Activated B cell treated with CpG ODN at 0.5 μM for 24 hours (primary cell): ENCODE measurements at regions of chr14 and their contacts with region 1.

Region 1: GRCh38 chr14:90903101-90903500 is 86.9 kb upstream of the TTC7B start:
- DNase-seq: no peak
- ATAC-seq: peak; percentile 66
- H3K4me3 Mint-ChIP-seq: no peak overlapping the region
- H3K27ac Mint-ChIP-seq: no peak overlapping the region
- H3K4me1 Mint-ChIP-seq: peaks cover 14% of the 10 kb centered on the region
- H3K27me3 Mint-ChIP-seq: no peaks in the 10 kb centered on the region
- CTCF ChIP-seq: peak; percentile 89

Region 2: GRCh38 chr14:90890322-90891020 is 12.6 kb before region 1 on chr14:
- CTCF ChIA-PET with region 1: interaction called, 11 read pairs
- POLR2A ChIA-PET with region 1: no interaction called
- intact Hi-C with region 1: no loop called
- DNase-seq: no peak
- ATAC-seq: no peak
- H3K4me3 Mint-ChIP-seq: no peak overlapping the region
- H3K27ac Mint-ChIP-seq: no peak overlapping the region
- H3K4me1 Mint-ChIP-seq: no peaks in the 10 kb centered on the region
- H3K27me3 Mint-ChIP-seq: no peaks in the 10 kb centered on the region
- CTCF ChIP-seq: no peak

Region 3: DNA sequence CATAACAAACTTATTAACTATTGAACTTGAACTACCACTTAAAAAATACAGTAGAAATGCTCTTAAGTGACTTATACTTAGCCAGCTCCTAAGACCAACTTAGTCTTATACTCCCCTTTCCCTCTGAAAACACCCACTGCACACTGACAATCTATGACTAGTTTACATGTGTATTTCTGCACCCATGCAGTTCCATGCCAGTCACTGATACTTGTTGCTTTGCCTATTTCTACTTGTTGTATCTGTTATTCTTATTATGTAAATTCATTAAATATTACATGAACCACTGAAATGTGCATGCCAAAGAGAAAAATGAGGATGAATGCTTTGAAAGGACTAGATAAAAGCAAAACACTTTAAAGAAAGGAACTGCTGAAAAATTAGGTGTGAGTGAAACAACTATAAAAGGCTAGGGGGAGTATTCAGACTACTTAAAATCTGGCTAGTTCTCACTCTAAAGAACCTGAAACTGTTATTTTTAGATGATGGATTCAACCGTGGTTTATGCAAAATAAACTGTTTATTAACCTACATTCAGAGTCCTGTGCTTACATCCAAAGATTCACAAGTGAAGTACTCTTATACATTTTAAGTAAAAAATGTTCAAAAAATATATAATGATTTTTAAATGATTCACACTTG is 82.6 kb after region 1 on chr14:
- CTCF ChIA-PET with region 1: interaction called, 11 read pairs
- POLR2A ChIA-PET with region 1: no interaction called
- intact Hi-C with region 1: loop called (anchors 5 kb)
- DNase-seq: no peak
- ATAC-seq: peak; percentile 57
- H3K4me3 Mint-ChIP-seq: no peak overlapping the region
- H3K27ac Mint-ChIP-seq: no peak overlapping the region
- H3K4me1 Mint-ChIP-seq: peaks cover 19% of the 10 kb centered on the region
- H3K27me3 Mint-ChIP-seq: no peaks in the 10 kb centered on the region
- CTCF ChIP-seq: no peak

Region 4: DNA sequence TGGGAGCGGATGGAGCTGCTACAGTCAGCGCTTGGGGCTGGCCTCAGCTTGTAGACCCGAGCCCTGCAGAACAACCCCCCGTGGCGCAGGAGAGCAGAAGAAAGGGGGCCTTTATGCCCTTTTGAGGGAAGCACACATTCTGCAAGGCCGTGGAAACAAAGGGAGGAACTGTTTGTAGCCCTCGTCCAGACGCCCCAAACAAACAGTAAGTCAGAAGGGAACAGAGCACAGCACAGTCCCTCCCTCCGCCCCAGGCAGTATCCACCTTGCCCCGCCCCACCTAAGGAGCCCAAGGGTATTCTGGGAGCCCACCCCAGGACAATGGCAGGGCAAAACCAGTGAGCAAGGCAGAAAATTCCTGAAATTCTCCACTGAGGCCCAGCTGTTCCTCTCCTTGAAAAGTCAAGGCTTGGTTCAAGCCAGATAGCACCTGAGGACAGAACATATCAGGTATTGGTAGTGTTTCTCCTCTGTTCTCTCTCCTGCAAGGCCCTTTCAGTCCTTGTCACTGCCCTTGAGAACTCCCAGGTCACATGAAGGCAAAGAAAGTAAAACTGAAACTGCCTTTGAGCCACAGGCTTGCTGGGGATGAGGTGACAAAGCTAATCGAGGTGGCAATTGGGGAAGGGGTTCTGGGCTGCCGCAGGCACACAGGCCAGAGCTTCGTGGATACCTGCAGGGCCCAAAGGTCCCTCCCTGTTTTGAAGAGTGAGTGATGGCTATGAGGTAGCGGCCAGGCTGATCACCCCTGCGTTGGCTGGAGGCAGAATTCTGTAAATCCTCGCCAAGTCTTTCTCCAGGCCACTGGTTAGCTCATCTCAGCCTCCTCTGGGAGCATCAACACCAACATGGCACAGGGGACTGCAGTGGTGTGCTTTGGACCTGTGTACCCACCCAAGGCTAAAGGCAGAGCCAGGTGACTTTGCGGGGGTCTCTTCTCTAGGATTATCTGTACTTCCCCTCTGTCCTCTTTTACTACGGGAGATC is 211.3 kb after region 1 on chr14:
- CTCF ChIA-PET with region 1: interaction called, 6 read pairs
- POLR2A ChIA-PET with region 1: interaction called, 12 read pairs
- intact Hi-C with region 1: loop called (anchors 1 kb)
- DNase-seq: peak; percentile 54
- ATAC-seq: peak; percentile 84
- H3K4me3 Mint-ChIP-seq: peak overlapping the region; percentile 98
- H3K27ac Mint-ChIP-seq: peak overlapping the region; percentile 98
- H3K4me1 Mint-ChIP-seq: peaks cover 67% of the 10 kb centered on the region
- H3K27me3 Mint-ChIP-seq: no peaks in the 10 kb centered on the region
- CTCF ChIP-seq: no peak

Region 5: DNA sequence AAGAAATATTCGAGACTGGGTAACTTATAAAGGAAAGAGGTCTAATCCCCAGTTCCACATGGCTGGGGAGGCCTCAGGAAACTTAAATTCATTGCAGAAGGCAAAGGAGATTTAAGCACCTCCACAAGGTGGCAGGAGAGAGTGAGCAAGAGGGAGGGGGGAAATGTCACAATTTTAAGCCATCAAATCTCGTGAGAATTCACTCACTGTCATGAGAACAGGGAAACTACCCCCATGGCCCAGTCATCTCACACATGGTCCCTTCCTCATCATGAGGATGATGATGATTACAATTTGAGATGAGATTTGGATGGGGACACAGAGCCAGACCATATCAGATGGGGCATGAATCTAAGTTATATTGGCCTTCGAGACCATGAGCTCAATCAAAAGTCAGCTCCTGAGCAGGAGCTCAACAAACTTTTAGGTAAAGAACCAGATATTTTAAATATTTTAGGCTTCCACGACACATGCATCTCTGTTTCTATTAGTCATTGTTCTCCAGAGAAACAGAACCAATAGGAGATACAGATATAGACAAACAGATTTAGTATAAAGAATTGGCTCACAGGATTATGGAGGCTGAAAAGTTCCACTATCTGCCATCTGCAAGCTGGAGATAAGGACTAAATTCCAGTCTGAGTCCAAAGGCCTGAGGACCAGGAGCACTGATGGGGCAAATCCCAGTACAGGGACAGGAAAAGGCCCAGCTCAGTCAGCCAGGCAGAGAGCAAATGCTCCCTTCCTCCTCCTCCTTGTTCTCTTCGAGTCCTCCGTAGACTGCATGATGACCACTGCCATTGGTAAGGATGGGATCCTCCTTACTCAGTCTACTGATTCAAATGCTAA is 235.6 kb after region 1 on chr14:
- CTCF ChIA-PET with region 1: interaction called, 7 read pairs
- POLR2A ChIA-PET with region 1: no interaction called
- intact Hi-C with region 1: loop called (anchors 10 kb)
- DNase-seq: no peak
- ATAC-seq: peak; percentile 29
- H3K4me3 Mint-ChIP-seq: no peak overlapping the region
- H3K27ac Mint-ChIP-seq: peak overlapping the region; percentile 69
- H3K4me1 Mint-ChIP-seq: peaks cover 32% of the 10 kb centered on the region
- H3K27me3 Mint-ChIP-seq: no peaks in the 10 kb centered on the region
- CTCF ChIP-seq: no peak

Region 6: DNA sequence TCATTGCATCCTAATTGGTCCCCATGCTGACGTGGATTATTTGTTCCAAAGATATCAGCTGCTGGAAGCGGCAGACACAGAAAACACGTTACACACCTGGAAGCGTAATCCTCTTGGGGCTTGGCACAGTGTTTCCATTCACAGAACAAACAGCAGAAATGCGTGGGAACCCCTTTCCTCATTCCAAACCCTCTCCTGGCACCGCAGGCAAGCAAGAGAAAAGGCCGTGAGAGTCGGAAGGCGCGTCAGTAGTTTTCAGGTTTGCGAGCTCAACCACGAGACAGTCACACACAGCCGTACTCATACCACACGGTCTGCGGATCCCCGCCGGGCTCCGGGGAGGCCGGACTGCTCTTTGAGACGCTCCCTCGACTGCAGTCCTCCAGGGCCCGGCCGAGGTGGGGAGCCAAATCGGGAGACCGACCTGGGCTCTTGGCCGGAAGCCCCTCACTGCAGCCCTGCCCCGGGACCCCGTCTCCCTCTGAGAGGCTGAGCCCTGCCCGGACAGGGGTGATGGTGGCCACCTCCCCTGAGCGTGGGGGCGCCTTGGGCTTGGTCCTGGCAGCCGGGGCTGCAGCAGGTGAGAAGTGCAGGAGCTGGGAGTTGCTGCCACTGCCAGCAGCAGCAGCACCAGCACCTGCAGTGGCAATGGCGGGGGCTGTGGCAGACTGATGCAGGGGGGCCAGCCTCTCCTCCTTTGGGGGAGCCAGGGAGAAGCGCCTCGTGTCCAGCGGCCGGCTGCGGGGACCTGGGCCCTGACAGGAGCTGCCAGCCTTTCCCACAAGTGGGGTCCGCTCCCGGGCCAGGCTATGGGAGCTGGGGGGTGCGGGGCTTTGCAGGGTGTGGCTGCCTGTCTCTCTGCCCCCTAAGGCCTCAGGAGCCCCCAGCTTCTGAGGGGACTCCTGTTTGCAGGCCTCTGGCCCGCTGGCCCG is 369.5 kb after region 1 on chr14:
- CTCF ChIA-PET with region 1: no interaction called
- POLR2A ChIA-PET with region 1: no interaction called
- intact Hi-C with region 1: no loop called
- DNase-seq: no peak
- ATAC-seq: no peak
- H3K4me3 Mint-ChIP-seq: no peak overlapping the region
- H3K27ac Mint-ChIP-seq: no peak overlapping the region
- H3K4me1 Mint-ChIP-seq: no peaks in the 10 kb centered on the region
- H3K27me3 Mint-ChIP-seq: no peaks in the 10 kb centered on the region
- CTCF ChIP-seq: no peak

Region 7: GRCh38 chr14:91286530-91286937 is 383.4 kb after region 1 on chr14:
- CTCF ChIA-PET with region 1: interaction called, 21 read pairs
- POLR2A ChIA-PET with region 1: no interaction called
- intact Hi-C with region 1: loop called (anchors 1 kb)
- DNase-seq: peak; percentile 64
- ATAC-seq: peak; percentile 88
- H3K4me3 Mint-ChIP-seq: no peak overlapping the region
- H3K27ac Mint-ChIP-seq: no peak overlapping the region
- H3K4me1 Mint-ChIP-seq: peaks cover 24% of the 10 kb centered on the region
- H3K27me3 Mint-ChIP-seq: no peaks in the 10 kb centered on the region
- CTCF ChIP-seq: peak; percentile 90